ENCODE measurements at regions of chr11 and their contacts with region 1.

Region 1: DNA sequence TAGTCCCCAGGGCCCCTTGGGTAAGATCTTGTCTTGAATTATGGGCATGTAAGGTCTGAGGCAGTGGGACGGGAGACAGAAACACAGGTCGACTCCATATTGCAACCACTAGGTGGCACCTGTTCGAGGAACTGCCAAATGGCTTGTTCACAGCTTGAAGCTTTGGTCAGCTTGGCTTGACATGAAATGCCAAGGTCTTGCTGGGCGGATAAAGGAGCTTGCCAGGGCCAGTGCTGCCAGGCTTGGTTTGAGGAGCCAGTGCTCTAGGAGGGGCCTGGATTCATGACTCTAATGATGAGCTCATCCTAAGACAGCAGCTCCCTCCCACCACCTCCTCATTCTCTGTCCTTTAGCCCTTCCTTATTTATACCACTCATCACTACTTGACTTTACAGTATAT is 11.9 kb upstream of the NRIP3 start:
- DNase-seq: peak; percentile 79
- H3K4me3 Mint-ChIP-seq: no peak overlapping the region
- H3K27ac Mint-ChIP-seq: no peak overlapping the region
- H3K4me1 Mint-ChIP-seq: no peaks in the 10 kb centered on the region
- H3K27me3 Mint-ChIP-seq: no peaks in the 10 kb centered on the region
- CTCF ChIP-seq: peak; percentile 65

Region 2: DNA sequence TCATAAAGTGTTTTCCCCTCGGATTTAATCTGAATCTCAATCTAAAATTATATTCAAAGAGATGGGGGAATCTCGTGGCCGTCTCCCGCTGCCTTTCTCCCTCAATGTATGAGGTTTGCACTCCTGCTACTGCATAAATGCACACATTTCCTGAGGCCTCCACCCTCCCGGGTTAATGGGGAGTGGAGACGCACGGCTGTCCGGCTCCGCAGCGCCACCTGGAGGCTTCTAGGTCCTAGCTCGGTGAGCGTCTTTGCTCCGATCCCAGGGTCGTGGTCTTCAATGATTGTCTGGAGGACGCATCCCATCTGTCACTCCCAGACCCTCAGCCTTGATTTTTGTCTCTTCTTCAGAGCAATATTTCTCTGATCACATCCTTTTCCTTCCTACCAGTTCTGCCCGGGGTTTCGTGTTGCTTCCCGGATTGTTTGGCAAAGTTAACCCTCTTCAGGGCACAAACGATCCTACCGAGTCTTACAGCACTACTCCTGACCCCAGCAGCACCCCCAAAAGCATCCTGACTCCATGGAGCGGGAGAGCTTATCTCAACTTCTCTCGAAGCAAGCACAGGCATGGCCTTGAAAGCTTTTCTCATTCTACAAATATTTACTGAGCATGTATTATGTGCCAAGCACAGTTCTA is 751.8 kb before region 1 on chr11 and contains the start of gene LMO1:
- CTCF ChIA-PET with region 1: no interaction called
- POLR2A ChIA-PET with region 1: no interaction called
- intact Hi-C with region 1: no loop called
- DNase-seq: peak; percentile 79
- H3K4me3 Mint-ChIP-seq: peak within 1 kb of the TSS; percentile 61
- H3K27ac Mint-ChIP-seq: no peak within 1 kb of the TSS
- H3K4me1 Mint-ChIP-seq: peaks cover 12% of the 10 kb centered on the region
- H3K27me3 Mint-ChIP-seq: peaks cover 12% of the 10 kb centered on the region
- CTCF ChIP-seq: peak; percentile 86
- total RNA-seq, gene LMO1: not detected in 2 replicates

Region 3: GRCh38 chr11:8768625-8769333 is 246.9 kb before region 1 on chr11:
- CTCF ChIA-PET with region 1: no interaction called
- POLR2A ChIA-PET with region 1: no interaction called
- intact Hi-C with region 1: no loop called
- DNase-seq: peak; percentile 80
- H3K4me3 Mint-ChIP-seq: no peak overlapping the region
- H3K27ac Mint-ChIP-seq: peak overlapping the region; percentile 81
- H3K4me1 Mint-ChIP-seq: peaks cover 59% of the 10 kb centered on the region
- H3K27me3 Mint-ChIP-seq: no peaks in the 10 kb centered on the region
- CTCF ChIP-seq: no peak

Region 4: DNA sequence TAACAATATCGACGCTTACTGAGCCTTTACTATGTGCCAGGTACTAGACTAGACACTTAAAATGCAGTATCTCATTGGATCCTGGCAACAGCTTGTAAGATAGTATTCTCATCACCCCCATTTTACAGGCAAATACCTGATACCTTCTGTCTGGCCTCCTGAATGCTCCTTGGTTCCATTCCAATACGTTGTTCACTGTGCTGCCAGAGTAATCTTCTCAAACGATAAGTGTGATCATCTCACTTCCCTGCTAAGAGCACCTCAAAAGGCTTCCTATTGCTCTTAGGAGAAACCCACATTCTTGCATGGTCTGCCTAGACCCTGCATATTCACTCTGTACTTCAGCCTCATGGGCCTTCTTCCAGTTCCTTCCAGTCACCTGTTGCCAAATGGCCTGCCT is 10.6 kb before region 1 on chr11:
- CTCF ChIA-PET with region 1: interaction called, 39 read pairs
- POLR2A ChIA-PET with region 1: no interaction called
- intact Hi-C with region 1: no loop called
- DNase-seq: no peak
- H3K4me3 Mint-ChIP-seq: peak overlapping the region; percentile 17
- H3K27ac Mint-ChIP-seq: no peak overlapping the region
- H3K4me1 Mint-ChIP-seq: peaks cover 13% of the 10 kb centered on the region
- H3K27me3 Mint-ChIP-seq: peaks cover 14% of the 10 kb centered on the region
- CTCF ChIP-seq: no peak

Region 5: DNA sequence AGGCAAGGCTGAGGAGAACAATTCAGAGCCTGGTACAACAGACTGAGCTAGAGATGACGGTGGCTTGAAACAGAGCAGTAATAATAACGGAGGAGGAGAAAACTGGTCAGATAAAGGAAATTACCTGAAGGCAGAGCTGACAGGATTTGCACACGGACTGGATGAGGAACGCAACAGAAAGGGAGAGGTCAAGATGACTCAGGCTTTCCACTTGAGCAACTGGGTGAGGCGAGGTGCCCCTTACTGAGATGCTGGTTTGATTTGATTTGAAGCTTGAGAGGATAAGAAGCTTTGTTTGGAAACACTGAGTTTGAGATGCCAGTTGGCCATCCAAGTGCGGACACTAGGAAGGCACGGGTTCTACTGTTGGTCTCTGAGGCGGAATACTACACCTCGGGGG is 23.5 kb after region 1 on chr11:
- CTCF ChIA-PET with region 1: interaction called, 58 read pairs
- POLR2A ChIA-PET with region 1: interaction called, 3 read pairs
- intact Hi-C with region 1: no loop called
- DNase-seq: peak; percentile 74
- H3K4me3 Mint-ChIP-seq: no peak overlapping the region
- H3K27ac Mint-ChIP-seq: peak overlapping the region; percentile 4
- H3K4me1 Mint-ChIP-seq: peaks cover 11% of the 10 kb centered on the region
- H3K27me3 Mint-ChIP-seq: no peaks in the 10 kb centered on the region
- CTCF ChIP-seq: no peak

Region 6: DNA sequence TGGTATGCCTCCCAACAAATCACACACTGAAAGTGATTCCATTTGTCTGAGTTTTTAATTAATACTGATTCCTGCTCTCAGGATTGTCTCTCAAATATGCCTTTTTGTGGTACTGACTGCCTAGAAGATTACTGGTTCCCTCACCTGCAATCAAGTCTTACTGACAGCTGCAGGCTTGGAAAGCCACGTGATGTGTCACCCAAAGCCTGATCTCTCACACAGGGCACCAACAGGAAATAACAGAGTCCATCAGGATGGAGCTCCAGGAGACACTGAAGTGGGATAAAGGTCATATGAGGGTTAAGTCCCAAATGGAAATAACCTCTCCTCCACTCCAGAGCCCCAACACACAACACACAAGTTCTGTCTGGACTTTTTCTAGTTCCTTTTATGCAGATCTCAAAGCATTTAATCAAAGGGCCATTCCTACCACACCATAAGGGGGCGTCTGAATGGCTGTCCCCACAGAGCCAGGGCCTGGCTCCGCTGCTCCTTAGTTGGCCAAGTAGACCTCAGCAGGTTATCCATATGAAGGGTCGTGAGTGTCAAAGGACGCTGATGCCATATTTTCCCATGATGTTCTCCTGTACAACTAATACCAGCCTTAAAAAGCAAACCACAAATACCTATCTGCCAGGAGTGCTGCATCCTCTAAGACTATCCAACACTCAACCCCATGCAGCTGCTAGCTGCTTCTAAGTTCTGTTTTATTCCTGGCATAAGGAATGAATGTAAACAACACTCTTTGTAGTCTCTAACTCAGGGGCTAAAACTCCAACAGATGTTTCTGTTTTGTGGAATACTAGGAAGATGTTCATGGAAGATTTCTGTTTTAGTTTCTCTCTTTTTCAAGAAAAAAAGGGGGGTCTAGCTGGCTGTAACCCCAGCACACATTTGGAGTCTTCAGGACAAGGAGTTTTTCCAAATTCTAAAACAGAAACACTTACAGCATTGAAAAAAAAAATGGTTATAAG is 62.7 kb after region 1 on chr11:
- CTCF ChIA-PET with region 1: interaction called, 15 read pairs
- POLR2A ChIA-PET with region 1: no interaction called
- intact Hi-C with region 1: no loop called
- DNase-seq: no peak
- H3K4me3 Mint-ChIP-seq: no peak overlapping the region
- H3K27ac Mint-ChIP-seq: no peak overlapping the region
- H3K4me1 Mint-ChIP-seq: no peaks in the 10 kb centered on the region
- H3K27me3 Mint-ChIP-seq: peaks cover 12% of the 10 kb centered on the region
- CTCF ChIP-seq: no peak

Region 7: GRCh38 chr11:9130297-9130696 is 114.6 kb after region 1 on chr11:
- CTCF ChIA-PET with region 1: interaction called, 201 read pairs
- POLR2A ChIA-PET with region 1: no interaction called
- intact Hi-C with region 1: no loop called
- DNase-seq: no peak
- H3K4me3 Mint-ChIP-seq: no peak overlapping the region
- H3K27ac Mint-ChIP-seq: no peak overlapping the region
- H3K4me1 Mint-ChIP-seq: no peaks in the 10 kb centered on the region
- H3K27me3 Mint-ChIP-seq: no peaks in the 10 kb centered on the region
- CTCF ChIP-seq: no peak

Region 8: GRCh38 chr11:9146477-9146876 is 130.8 kb after region 1 on chr11:
- CTCF ChIA-PET with region 1: interaction called, 201 read pairs
- POLR2A ChIA-PET with region 1: no interaction called
- intact Hi-C with region 1: no loop called
- DNase-seq: no peak
- H3K4me3 Mint-ChIP-seq: no peak overlapping the region
- H3K27ac Mint-ChIP-seq: no peak overlapping the region
- H3K4me1 Mint-ChIP-seq: peaks cover 20% of the 10 kb centered on the region
- H3K27me3 Mint-ChIP-seq: no peaks in the 10 kb centered on the region
- CTCF ChIP-seq: no peak

Region 9: GRCh38 chr11:9506489-9507276 is 491.0 kb after region 1 on chr11:
- CTCF ChIA-PET with region 1: interaction called, 30 read pairs
- POLR2A ChIA-PET with region 1: interaction called, 4 read pairs
- intact Hi-C with region 1: loop called (anchors 1 kb)
- DNase-seq: peak; percentile 82
- H3K4me3 Mint-ChIP-seq: no peak overlapping the region
- H3K27ac Mint-ChIP-seq: peak overlapping the region; percentile 16
- H3K4me1 Mint-ChIP-seq: peaks cover 17% of the 10 kb centered on the region
- H3K27me3 Mint-ChIP-seq: no peaks in the 10 kb centered on the region
- CTCF ChIP-seq: peak; percentile 74